Mammary epithelial cell (primary cell): ENCODE measurements at regions of chr19 and their contacts with region 1.

Region 1: DNA sequence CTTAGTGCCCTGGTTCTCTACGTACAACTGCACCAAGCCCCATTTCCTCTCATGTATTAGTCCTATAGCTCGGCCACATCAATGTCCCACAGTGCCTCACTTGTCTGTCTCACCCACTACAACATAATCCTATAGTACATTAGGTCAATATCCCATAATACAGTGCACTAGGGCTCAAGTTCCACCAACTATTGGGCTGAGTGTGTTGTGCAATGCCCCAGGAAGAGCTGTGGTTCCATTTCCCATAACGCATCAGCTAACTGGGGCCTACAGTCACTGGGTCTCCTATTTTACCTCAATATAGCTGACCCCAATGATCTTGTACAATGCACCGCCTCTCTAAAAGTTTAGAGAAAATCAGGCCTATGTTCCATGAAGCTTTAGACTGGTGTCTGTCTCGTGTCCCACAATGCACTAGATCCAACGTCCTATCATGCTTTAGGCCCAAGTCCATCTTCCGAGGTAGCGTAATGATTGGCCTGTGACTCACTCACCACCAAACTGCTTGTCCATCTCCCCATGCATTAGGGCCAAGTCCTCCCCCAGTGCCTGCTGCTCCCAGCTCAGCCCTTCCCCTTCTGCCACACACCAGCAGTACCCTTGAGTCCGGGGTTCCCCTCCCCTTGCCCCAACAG is 21.8 kb downstream of the TSKS start:
- DNase-seq: no peak
- H3K4me3 ChIP-seq: no peak overlapping the region
- H3K27ac ChIP-seq: no peak overlapping the region
- H3K4me1 ChIP-seq: no peaks in the 10 kb centered on the region
- H3K27me3 ChIP-seq: no peaks in the 10 kb centered on the region
- CTCF ChIP-seq: no peak

Region 2: DNA sequence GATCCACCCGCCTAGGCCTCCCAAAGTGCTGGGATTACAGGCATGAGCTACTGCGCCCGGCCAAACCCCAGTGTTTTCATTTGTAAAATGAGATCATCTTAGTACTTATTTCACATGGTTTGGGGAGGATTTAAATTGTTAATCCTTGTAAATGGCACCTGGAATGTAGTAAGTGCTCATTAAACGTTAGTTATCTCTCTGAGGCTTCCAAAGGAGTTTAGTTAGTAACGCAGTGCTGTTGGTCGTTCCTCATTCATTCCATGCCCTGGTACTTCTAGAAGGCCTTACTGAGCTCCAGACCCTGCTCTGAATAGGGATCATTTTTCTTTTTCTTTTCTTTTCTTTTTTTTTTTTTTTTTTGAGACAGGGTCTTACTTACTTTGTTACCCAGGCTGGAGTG is 45.2 kb before region 1 on chr19:
- CTCF ChIA-PET with region 1: no interaction called
- dilution Hi-C with region 1: loop called (anchors 5 kb)
- in situ Hi-C with region 1: no loop called
- intact Hi-C with region 1: no loop called
- DNase-seq: no peak
- H3K4me3 ChIP-seq: no peak overlapping the region
- H3K27ac ChIP-seq: no peak overlapping the region
- H3K4me1 ChIP-seq: no peaks in the 10 kb centered on the region
- H3K27me3 ChIP-seq: peaks cover 3% of the 10 kb centered on the region
- CTCF ChIP-seq: no peak

Region 3: DNA sequence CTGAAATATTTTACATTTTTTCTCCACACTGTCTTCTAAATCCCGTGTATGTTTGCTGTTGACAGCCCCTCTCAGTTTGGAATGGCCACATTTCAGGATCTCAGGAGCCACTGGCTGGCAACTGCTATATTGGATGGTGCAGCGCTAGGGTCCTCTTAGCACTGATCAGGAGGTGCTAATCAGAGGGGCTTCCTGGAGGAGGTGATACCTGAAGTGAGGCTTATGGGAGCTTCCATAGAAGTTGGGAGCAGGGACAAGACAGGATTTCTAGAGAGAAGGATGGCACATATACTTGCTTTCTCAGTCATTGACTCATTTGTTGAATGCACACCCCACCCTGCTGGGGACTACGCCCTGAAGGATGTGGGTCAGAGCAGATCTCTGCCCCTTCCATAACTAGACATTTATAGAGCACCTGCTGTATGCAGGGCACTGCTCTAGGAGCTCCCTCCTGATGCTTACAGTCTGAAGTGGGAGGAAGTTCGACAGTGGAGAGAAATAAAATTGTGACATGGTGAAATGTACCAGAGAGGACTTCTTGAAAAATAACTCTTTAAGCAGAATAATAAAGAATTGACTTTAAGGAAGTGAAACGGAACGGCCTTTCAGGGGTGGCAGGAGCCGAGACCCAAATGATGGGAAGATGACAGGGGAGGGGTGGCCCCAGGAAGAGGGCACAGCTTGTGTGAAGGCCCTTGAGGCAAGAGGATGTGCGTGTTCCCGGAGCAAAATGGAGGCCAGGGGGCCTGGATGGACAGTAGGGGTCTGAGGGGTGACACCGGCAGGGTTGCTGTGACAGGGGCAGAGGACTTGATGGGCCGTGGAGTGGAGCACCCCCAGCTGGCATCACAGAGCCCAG is 38.6 kb after region 1 on chr19:
- CTCF ChIA-PET with region 1: no interaction called
- dilution Hi-C with region 1: loop called (anchors 5 kb)
- in situ Hi-C with region 1: no loop called
- intact Hi-C with region 1: no loop called
- DNase-seq: no peak
- H3K4me3 ChIP-seq: no peak overlapping the region
- H3K27ac ChIP-seq: no peak overlapping the region
- H3K4me1 ChIP-seq: no peaks in the 10 kb centered on the region
- H3K27me3 ChIP-seq: no peaks in the 10 kb centered on the region
- CTCF ChIP-seq: no peak